ENCODE measurements at regions of chr6 and their contacts with region 1.

Region 1: GRCh38 chr6:157563611-157564284 is 182.8 kb downstream of the ZDHHC14 start:
- DNase-seq: peak in 1 of 9 experiments; percentile 46
- ATAC-seq: no peak
- H3K4me3 ChIP-seq: no peak overlapping the region
- H3K4me3 Mint-ChIP-seq: no peak overlapping the region
- H3K27ac ChIP-seq: no peak overlapping the region
- H3K27ac Mint-ChIP-seq: no peak overlapping the region
- H3K4me1 ChIP-seq: peaks cover 16% of the 10 kb centered on the region
- H3K4me1 Mint-ChIP-seq: peaks cover 36% of the 10 kb centered on the region
- H3K27me3 ChIP-seq: no peaks in the 10 kb centered on the region
- H3K27me3 Mint-ChIP-seq: no peaks in the 10 kb centered on the region
- CTCF ChIP-seq: no peak

Region 2: GRCh38 chr6:157379656-157380454 is 183.9 kb before region 1 on chr6:
- CTCF ChIA-PET with region 1: no interaction called
- POLR2A ChIA-PET with region 1: no interaction called
- intact Hi-C with region 1: loop called in 1 of 2 experiments (anchors 10 kb)
- DNase-seq: peak; percentile 76 to 92 (median 89)
- ATAC-seq: peak; percentile 79
- H3K4me3 ChIP-seq: peak overlapping the region; percentile 92 to 96
- H3K4me3 Mint-ChIP-seq: peak overlapping the region; percentile 83
- H3K27ac ChIP-seq: peak overlapping the region; percentile 68 to 80
- H3K27ac Mint-ChIP-seq: peak overlapping the region; percentile 64
- H3K4me1 ChIP-seq: peaks cover 10% of the 10 kb centered on the region
- H3K4me1 Mint-ChIP-seq: peaks cover 20% of the 10 kb centered on the region
- H3K27me3 ChIP-seq: no peaks in the 10 kb centered on the region
- H3K27me3 Mint-ChIP-seq: no peaks in the 10 kb centered on the region
- CTCF ChIP-seq: no peak

Region 3: GRCh38 chr6:157813757-157814455 is 250.2 kb after region 1 on chr6:
- CTCF ChIA-PET with region 1: no interaction called
- POLR2A ChIA-PET with region 1: no interaction called
- intact Hi-C with region 1: no loop called
- DNase-seq: no peak
- ATAC-seq: no peak
- H3K4me3 ChIP-seq: no peak overlapping the region
- H3K4me3 Mint-ChIP-seq: no peak overlapping the region
- H3K27ac ChIP-seq: no peak overlapping the region
- H3K27ac Mint-ChIP-seq: peak overlapping the region; percentile 3
- H3K4me1 ChIP-seq: peaks cover 40% of the 10 kb centered on the region
- H3K4me1 Mint-ChIP-seq: peaks cover 48% of the 10 kb centered on the region
- H3K27me3 ChIP-seq: no peaks in the 10 kb centered on the region
- H3K27me3 Mint-ChIP-seq: no peaks in the 10 kb centered on the region
- CTCF ChIP-seq: no peak